CD4-positive, alpha-beta memory T cell (primary cell): ENCODE measurements at regions of chr5 and their contacts with region 1.

Region 1: GRCh38 chr5:131382407-131383395 is 118.8 kb downstream of the CDC42SE2 start:
- DNase-seq: peak; percentile 79 to 89 (median 84)
- H3K4me3 ChIP-seq: peak overlapping the region in 1 of 2 donors; percentile 33
- H3K4me3 Mint-ChIP-seq: peak overlapping the region; percentile 67 to 90 (median 76)
- H3K27ac ChIP-seq: peak overlapping the region; percentile 99
- H3K27ac Mint-ChIP-seq: peak overlapping the region; percentile 96 to 99 (median 98)
- H3K4me1 ChIP-seq: peaks cover 100% of the 10 kb centered on the region
- H3K4me1 Mint-ChIP-seq: peaks cover 67 to 100% (median 86%) of the 10 kb centered on the region in 4 donors
- H3K27me3 ChIP-seq: no peaks in the 10 kb centered on the region
- H3K27me3 Mint-ChIP-seq: no peaks in the 10 kb centered on the region

Region 2: DNA sequence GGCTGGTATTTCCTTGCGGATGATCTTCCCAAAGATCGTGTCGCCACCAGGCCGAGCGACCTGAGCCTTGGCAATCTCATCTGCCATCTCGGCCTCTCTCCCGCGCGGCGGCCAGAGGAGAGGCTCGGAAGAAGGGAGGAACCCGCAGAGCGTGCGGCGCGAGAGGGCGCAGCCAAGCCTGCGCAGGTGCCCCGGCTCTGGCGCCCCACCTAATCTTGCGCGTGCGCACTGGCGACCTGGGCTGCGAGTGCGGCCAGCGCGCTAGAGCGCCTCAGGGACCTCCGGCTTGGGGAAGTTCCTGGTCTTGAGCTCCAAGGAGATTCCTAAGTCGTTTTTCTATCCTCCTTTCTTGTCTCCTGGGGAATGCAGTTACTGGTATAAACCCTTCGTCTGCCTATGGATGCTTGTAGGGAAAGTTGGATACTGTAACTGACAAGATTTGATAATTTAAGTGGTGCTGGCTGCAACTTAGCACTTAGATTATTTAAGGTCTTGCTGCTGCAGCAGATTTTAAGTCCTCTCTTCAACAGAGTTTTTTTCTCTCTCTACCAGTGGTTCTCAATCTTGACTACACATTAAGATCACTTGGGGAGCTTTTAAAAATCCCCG is 217.5 kb before region 1 on chr5 and contains the start of gene HINT1:
- CTCF ChIA-PET with region 1: interaction called, 22 read pairs
- POLR2A ChIA-PET with region 1: interaction called, 17 read pairs
- intact Hi-C with region 1: loop called (anchors 1 kb)
- DNase-seq: peak; percentile 86 to 92 (median 91)
- H3K4me3 ChIP-seq: peak within 1 kb of the TSS; percentile 31 to 89
- H3K4me3 Mint-ChIP-seq: peak within 1 kb of the TSS; percentile 94 to 98 (median 98)
- H3K27ac ChIP-seq: peak within 1 kb of the TSS; percentile 96
- H3K27ac Mint-ChIP-seq: peak within 1 kb of the TSS; percentile 89 to 99 (median 98)
- H3K4me1 ChIP-seq: peaks cover 49% of the 10 kb centered on the region
- H3K4me1 Mint-ChIP-seq: peaks cover 37 to 78% (median 52%) of the 10 kb centered on the region in 4 donors
- H3K27me3 ChIP-seq: no peaks in the 10 kb centered on the region
- H3K27me3 Mint-ChIP-seq: no peaks in the 10 kb centered on the region
- total RNA-seq, gene HINT1: 278 to 289 TPM

Region 3: DNA sequence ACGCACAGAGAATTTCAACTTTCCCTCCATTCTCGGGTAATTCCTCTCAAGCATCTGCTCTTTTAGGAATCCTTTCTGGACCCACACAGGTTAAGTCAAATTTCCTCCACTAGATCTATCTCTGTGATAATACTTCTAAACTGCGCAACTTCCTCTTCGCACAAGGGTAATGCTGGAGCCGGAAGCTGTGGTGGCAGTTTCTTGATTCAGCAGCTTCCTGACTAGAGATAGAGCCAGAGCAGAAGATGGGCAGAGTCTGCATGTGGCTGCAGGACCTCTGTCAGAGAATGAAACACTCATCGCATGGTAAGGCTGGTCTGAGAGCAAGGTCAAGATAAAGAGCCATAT is 129.9 kb before region 1 on chr5:
- CTCF ChIA-PET with region 1: interaction called, 31 read pairs
- POLR2A ChIA-PET with region 1: interaction called, 552 read pairs
- intact Hi-C with region 1: loop called (anchors 1 kb)
- DNase-seq: peak; percentile 86 to 95 (median 88)
- H3K4me3 ChIP-seq: peak overlapping the region; percentile 60 to 80
- H3K4me3 Mint-ChIP-seq: peak overlapping the region; percentile 94 to 98 (median 97)
- H3K27ac ChIP-seq: peak overlapping the region; percentile 79
- H3K27ac Mint-ChIP-seq: peak overlapping the region; percentile 92 to 99 (median 97)
- H3K4me1 ChIP-seq: peaks cover 58% of the 10 kb centered on the region
- H3K4me1 Mint-ChIP-seq: peaks cover 46 to 78% (median 54%) of the 10 kb centered on the region in 4 donors
- H3K27me3 ChIP-seq: no peaks in the 10 kb centered on the region
- H3K27me3 Mint-ChIP-seq: no peaks in the 10 kb centered on the region

Region 4: GRCh38 chr5:131281133-131281867 is 101.4 kb before region 1 on chr5:
- CTCF ChIA-PET with region 1: interaction called, 26 read pairs
- POLR2A ChIA-PET with region 1: interaction called, 208 read pairs
- intact Hi-C with region 1: loop called (anchors 1 kb)
- DNase-seq: peak; percentile 57 to 89 (median 85)
- H3K4me3 ChIP-seq: peak overlapping the region; percentile 0 to 37
- H3K4me3 Mint-ChIP-seq: peak overlapping the region; percentile 57 to 90 (median 82)
- H3K27ac ChIP-seq: peak overlapping the region; percentile 63
- H3K27ac Mint-ChIP-seq: peak overlapping the region; percentile 71 to 95 (median 87)
- H3K4me1 ChIP-seq: peaks cover 89% of the 10 kb centered on the region
- H3K4me1 Mint-ChIP-seq: peaks cover 54 to 89% (median 73%) of the 10 kb centered on the region in 4 donors
- H3K27me3 ChIP-seq: no peaks in the 10 kb centered on the region
- H3K27me3 Mint-ChIP-seq: no peaks in the 10 kb centered on the region

Region 5: GRCh38 chr5:131328536-131329285 is 54.0 kb before region 1 on chr5:
- CTCF ChIA-PET with region 1: interaction called, 13 read pairs
- POLR2A ChIA-PET with region 1: no interaction called
- intact Hi-C with region 1: no loop called
- DNase-seq: no peak
- H3K4me3 ChIP-seq: no peak overlapping the region
- H3K4me3 Mint-ChIP-seq: peak overlapping the region in 4 of 8 donors; percentile 26 to 68 (median 42)
- H3K27ac ChIP-seq: no peak overlapping the region
- H3K27ac Mint-ChIP-seq: peak overlapping the region; percentile 38 to 96 (median 69)
- H3K4me1 ChIP-seq: peaks cover 76% of the 10 kb centered on the region
- H3K4me1 Mint-ChIP-seq: peaks cover 48 to 83% (median 66%) of the 10 kb centered on the region in 4 donors
- H3K27me3 ChIP-seq: no peaks in the 10 kb centered on the region
- H3K27me3 Mint-ChIP-seq: no peaks in the 10 kb centered on the region

Region 6: DNA sequence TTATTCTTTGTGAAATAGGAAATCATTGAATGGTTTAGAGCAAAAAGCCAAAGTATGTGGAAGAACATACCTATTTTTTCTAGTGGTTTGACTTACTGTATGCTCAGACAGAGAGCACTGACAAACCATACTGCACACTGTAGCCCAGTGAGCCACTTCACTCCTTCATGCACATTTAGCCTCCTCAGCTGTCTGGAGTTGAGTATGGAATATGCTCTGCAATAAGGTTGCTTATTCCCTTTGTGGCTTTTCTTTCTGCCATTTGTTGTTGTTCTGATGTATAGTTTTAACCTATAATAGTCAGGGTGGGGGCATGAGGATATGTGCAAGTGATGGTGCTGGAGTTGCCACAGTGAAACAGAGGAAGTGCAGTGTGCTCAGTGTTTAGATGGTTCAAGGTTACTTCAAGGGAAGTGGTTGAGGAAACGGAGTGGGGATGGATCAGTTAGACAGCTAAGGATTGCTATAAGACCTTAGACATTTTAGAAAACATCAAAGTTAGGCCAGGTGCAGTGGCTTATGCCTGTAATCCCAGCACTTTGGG is 18.1 kb before region 1 on chr5:
- CTCF ChIA-PET with region 1: interaction called, 48 read pairs
- POLR2A ChIA-PET with region 1: interaction called, 24 read pairs
- intact Hi-C with region 1: loop called (anchors 1 kb)
- DNase-seq: peak in 3 of 5 donors; percentile 43 to 50 (median 48)
- H3K4me3 ChIP-seq: no peak overlapping the region
- H3K4me3 Mint-ChIP-seq: peak overlapping the region; percentile 14 to 73 (median 58)
- H3K27ac ChIP-seq: peak overlapping the region; percentile 4
- H3K27ac Mint-ChIP-seq: peak overlapping the region; percentile 56 to 97 (median 79)
- H3K4me1 ChIP-seq: peaks cover 86% of the 10 kb centered on the region
- H3K4me1 Mint-ChIP-seq: peaks cover 51 to 89% (median 72%) of the 10 kb centered on the region in 4 donors
- H3K27me3 ChIP-seq: no peaks in the 10 kb centered on the region
- H3K27me3 Mint-ChIP-seq: no peaks in the 10 kb centered on the region

Region 7: DNA sequence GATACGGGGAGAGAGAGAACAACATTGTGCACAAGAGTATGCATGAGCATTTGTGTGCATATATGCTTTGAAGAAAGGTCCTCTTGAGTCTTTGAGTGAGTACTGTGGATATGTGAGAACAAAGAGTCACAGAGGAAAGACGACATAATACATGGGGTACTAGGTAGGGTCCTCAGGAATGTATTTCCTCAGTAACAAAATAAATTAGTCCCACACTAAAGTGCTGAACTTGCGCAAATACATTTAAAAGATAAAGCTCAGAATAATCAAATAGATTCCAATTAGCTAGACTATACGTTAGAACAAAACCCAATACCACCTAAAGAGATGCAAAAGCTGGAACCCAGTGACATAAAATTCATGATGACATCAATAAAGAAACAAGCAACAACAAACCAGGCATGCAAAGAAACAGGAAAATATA is 181.5 kb after region 1 on chr5:
- CTCF ChIA-PET with region 1: no interaction called
- POLR2A ChIA-PET with region 1: no interaction called
- intact Hi-C with region 1: no loop called
- DNase-seq: no peak
- H3K4me3 ChIP-seq: no peak overlapping the region
- H3K4me3 Mint-ChIP-seq: peak overlapping the region in 1 of 8 donors; percentile 7
- H3K27ac ChIP-seq: no peak overlapping the region
- H3K27ac Mint-ChIP-seq: peak overlapping the region in 3 of 7 donors; percentile 8 to 53 (median 11)
- H3K4me1 ChIP-seq: peaks cover 10% of the 10 kb centered on the region
- H3K4me1 Mint-ChIP-seq: peaks cover 20 to 57% (median 32%) of the 10 kb centered on the region in 4 donors
- H3K27me3 ChIP-seq: no peaks in the 10 kb centered on the region
- H3K27me3 Mint-ChIP-seq: no peaks in the 10 kb centered on the region